H1 (cell line): ENCODE measurements at regions of chr7 and their contacts with region 1.

Region 1: GRCh38 chr7:142811154-142811737 is 40.5 kb downstream of the PRSS2 start:
- DNase-seq: no peak
- H3K4me3 ChIP-seq: no peak overlapping the region
- H3K27ac ChIP-seq: no peak overlapping the region
- H3K4me1 ChIP-seq: peaks cover 10 to 23% (median 17%) of the 10 kb centered on the region in 4 experiments
- H3K27me3 ChIP-seq: no peaks in the 10 kb centered on the region
- CTCF ChIP-seq: peak in 2 of 3 experiments; percentile 60 to 68; a peak in 3 of 4 replicates
- EP300 ChIP-seq: no peak
- POLR2A ChIP-seq: no peak
- RAD21 ChIP-seq: peak; percentile 65 to 78

Region 2: DNA sequence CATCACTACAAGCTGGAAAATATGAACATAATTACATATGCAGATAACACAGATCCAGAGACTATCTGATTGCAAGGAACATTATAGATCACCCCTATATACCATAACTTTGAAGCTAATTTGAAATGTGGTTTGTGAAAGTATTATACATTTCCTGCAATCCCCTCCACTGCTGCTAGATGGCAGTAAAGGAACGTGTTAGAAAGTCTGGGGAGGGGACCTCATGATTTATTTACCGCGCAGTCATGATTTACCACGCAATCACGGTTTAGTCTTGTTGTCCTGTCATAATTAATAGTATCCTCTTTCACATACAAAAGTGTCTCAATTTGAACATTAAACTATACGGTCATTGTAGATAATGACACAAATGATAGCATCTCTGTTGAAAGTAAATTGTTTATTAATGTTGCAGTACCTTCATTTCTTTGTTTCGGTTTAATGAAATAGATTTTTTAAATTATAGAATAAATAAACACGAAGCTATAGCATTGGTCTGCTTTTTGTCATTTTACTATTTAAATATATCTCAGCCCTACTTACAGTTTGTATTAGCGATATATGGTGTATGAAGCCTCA is 207.3 kb before region 1 on chr7:
- CTCF ChIA-PET with region 1: interaction called, 40 read pairs
- POLR2A ChIA-PET with region 1: no interaction called
- DNase-seq: peak in 1 of 2 experiments; percentile 58
- H3K4me3 ChIP-seq: peak overlapping the region in 1 of 4 experiments; percentile 43; a peak in 1 of 8 replicates
- H3K27ac ChIP-seq: no peak overlapping the region
- H3K4me1 ChIP-seq: no peaks in the 10 kb centered on the region
- H3K27me3 ChIP-seq: no peaks in the 10 kb centered on the region
- CTCF ChIP-seq: peak in 2 of 3 experiments; percentile 75 to 77; a peak in 3 of 4 replicates
- EP300 ChIP-seq: no peak
- POLR2A ChIP-seq: no peak
- RAD21 ChIP-seq: peak; percentile 86

Region 3: DNA sequence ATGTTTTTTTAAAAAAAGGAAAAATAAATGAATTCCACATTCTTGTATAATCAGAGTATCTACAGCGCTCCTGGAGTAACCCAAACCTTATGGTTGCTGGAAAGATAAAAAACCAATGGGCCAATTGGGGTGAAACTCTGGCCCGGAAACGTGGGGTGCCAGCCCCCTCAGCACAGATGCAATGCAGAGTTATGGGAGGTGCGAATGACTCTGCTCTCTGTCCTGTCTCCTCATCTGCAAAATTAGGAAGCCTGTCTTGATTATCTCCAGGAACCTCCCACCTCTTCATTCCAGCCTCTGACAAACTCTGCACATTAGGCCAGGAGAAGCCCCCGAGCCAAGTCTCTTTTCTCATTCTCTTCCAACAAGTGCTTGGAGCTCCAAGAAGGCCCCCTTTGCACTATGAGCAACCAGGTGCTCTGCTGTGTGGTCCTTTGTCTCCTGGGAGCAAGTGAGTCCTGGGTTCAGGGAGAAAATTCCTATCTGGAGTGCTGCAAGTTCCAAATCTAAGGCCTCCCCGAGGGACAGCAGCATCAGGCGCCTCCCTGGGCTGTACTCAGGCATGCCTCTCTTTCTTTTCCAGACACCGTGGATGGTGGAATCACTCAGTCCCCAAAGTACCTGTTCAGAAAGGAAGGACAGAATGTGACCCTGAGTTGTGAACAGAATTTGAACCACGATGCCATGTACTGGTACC is 192.4 kb before region 1 on chr7:
- CTCF ChIA-PET with region 1: no interaction called
- POLR2A ChIA-PET with region 1: no interaction called
- DNase-seq: no peak
- H3K4me3 ChIP-seq: no peak overlapping the region
- H3K27ac ChIP-seq: no peak overlapping the region
- H3K4me1 ChIP-seq: peaks cover 0 to 2% (median 0%) of the 10 kb centered on the region in 4 experiments; a peak in 1 of 7 replicates
- H3K27me3 ChIP-seq: no peaks in the 10 kb centered on the region; a peak in 1 of 7 replicates
- CTCF ChIP-seq: no peak
- EP300 ChIP-seq: no peak
- POLR2A ChIP-seq: no peak
- RAD21 ChIP-seq: no peak

Region 4: GRCh38 chr7:142632291-142633134 is 178.7 kb before region 1 on chr7:
- CTCF ChIA-PET with region 1: interaction called, 105 read pairs
- POLR2A ChIA-PET with region 1: no interaction called
- DNase-seq: peak; percentile 43 to 81
- H3K4me3 ChIP-seq: no peak overlapping the region
- H3K27ac ChIP-seq: no peak overlapping the region
- H3K4me1 ChIP-seq: no peaks in the 10 kb centered on the region
- H3K27me3 ChIP-seq: no peaks in the 10 kb centered on the region
- CTCF ChIP-seq: peak; percentile 59 to 90 (median 72)
- EP300 ChIP-seq: no peak
- POLR2A ChIP-seq: no peak
- RAD21 ChIP-seq: peak; percentile 87 to 92

Region 5: GRCh38 chr7:142669074-142669654 is 142.1 kb before region 1 on chr7:
- CTCF ChIA-PET with region 1: interaction called, 34 read pairs
- POLR2A ChIA-PET with region 1: no interaction called
- DNase-seq: no peak
- H3K4me3 ChIP-seq: no peak overlapping the region
- H3K27ac ChIP-seq: no peak overlapping the region
- H3K4me1 ChIP-seq: no peaks in the 10 kb centered on the region
- H3K27me3 ChIP-seq: no peaks in the 10 kb centered on the region
- CTCF ChIP-seq: peak in 2 of 3 experiments; percentile 38 to 48; a peak in 2 of 4 replicates
- EP300 ChIP-seq: no peak
- POLR2A ChIP-seq: no peak
- RAD21 ChIP-seq: peak; percentile 64 to 65

Region 6: GRCh38 chr7:142762104-142762503 is 49.1 kb before region 1 on chr7:
- CTCF ChIA-PET with region 1: no interaction called
- POLR2A ChIA-PET with region 1: no interaction called
- DNase-seq: no peak
- H3K4me3 ChIP-seq: no peak overlapping the region
- H3K27ac ChIP-seq: no peak overlapping the region
- H3K4me1 ChIP-seq: peaks cover 0 to 4% (median 0%) of the 10 kb centered on the region in 4 experiments; a peak in 1 of 7 replicates
- H3K27me3 ChIP-seq: no peaks in the 10 kb centered on the region
- CTCF ChIP-seq: no peak
- EP300 ChIP-seq: no peak
- POLR2A ChIP-seq: no peak
- RAD21 ChIP-seq: no peak

Region 7: DNA sequence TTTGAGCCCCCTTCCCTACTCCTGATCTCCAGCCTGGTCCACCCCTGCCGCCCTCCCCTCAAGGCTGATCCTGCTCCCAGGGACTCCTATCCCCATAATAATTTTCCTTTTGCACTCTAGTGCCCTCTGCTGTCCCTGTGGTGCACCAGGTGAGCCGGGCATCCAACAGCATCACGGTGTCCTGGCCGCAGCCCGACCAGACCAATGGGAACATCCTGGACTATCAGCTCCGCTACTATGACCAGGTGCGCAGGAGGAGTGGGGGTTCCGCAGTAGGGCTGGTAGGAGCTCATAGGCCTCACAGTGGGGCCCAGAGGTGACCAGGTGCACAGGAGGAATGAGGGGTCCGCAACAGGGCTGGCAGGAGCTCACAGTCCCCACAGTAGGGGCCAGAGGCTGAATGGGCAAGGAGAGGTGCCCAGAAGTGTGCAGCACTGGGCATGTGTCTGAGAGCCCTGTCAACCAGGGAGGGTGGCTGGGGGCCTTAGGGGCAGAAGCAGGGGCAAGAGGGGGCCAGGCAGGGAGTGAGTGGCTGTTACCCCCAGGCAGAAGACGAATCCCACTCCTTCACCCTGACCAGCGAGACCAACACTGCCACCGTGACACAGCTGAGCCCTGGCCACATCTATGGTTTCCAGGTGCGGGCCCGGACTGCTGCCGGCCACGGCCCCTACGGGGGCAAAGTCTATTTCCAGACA is 55.3 kb after region 1 on chr7:
- CTCF ChIA-PET with region 1: interaction called, 32 read pairs
- POLR2A ChIA-PET with region 1: no interaction called
- DNase-seq: peak in 1 of 2 experiments; percentile 82
- H3K4me3 ChIP-seq: no peak overlapping the region
- H3K27ac ChIP-seq: no peak overlapping the region
- H3K4me1 ChIP-seq: peaks cover 3 to 10% (median 9%) of the 10 kb centered on the region in 4 experiments; a peak in 6 of 7 replicates
- H3K27me3 ChIP-seq: no peaks in the 10 kb centered on the region
- CTCF ChIP-seq: peak; percentile 79 to 84 (median 83)
- EP300 ChIP-seq: no peak
- POLR2A ChIP-seq: no peak
- RAD21 ChIP-seq: peak; percentile 67 to 77